ENCODE measurements at regions of chr11 and their contacts with region 1.

Region 1: GRCh38 chr11:36509694-36510566 is at the start of gene TRAF6:
- DNase-seq: peak; percentile 70 to 90 (median 84)
- H3K4me3 ChIP-seq: peak within 1 kb of the TSS; percentile 54 to 99 (median 93)
- H3K27ac ChIP-seq: peak within 1 kb of the TSS; percentile 53 to 97 (median 89)
- H3K27me3 ChIP-seq: no peaks in the 10 kb centered on the region
- CTCF ChIP-seq: peak; percentile 70 to 99 (median 92)
- total RNA-seq, gene TRAF6: 13.8 to 27.7 (median 20.8) TPM

Region 2: GRCh38 chr11:36594316-36594989 is 84.5 kb after region 1 on chr11 and contains the start of gene IFTAP:
- intact Hi-C with region 1: loop called in 1 of 2 experiments (anchors 10 kb)
- DNase-seq: peak in 9 of 10 donors; percentile 26 to 76 (median 40)
- H3K4me3 ChIP-seq: peak within 1 kb of the TSS; percentile 64 to 99 (median 85)
- H3K27ac ChIP-seq: peak within 1 kb of the TSS in 23 of 59 donors; percentile 5 to 84 (median 59)
- H3K27me3 ChIP-seq: peaks cover 0 to 25% (median 4%) of the 10 kb centered on the region in 45 donors
- CTCF ChIP-seq: peak in 37 of 56 donors; percentile 6 to 55 (median 33)
- total RNA-seq, gene IFTAP: 18.6 to 50.1 (median 32.4) TPM

Measured in dorsolateral prefrontal cortex (tissue), 120 donors.